OCI-LY7 (cell line): ENCODE measurements at regions of chr12 and their contacts with region 1.

Region 1: DNA sequence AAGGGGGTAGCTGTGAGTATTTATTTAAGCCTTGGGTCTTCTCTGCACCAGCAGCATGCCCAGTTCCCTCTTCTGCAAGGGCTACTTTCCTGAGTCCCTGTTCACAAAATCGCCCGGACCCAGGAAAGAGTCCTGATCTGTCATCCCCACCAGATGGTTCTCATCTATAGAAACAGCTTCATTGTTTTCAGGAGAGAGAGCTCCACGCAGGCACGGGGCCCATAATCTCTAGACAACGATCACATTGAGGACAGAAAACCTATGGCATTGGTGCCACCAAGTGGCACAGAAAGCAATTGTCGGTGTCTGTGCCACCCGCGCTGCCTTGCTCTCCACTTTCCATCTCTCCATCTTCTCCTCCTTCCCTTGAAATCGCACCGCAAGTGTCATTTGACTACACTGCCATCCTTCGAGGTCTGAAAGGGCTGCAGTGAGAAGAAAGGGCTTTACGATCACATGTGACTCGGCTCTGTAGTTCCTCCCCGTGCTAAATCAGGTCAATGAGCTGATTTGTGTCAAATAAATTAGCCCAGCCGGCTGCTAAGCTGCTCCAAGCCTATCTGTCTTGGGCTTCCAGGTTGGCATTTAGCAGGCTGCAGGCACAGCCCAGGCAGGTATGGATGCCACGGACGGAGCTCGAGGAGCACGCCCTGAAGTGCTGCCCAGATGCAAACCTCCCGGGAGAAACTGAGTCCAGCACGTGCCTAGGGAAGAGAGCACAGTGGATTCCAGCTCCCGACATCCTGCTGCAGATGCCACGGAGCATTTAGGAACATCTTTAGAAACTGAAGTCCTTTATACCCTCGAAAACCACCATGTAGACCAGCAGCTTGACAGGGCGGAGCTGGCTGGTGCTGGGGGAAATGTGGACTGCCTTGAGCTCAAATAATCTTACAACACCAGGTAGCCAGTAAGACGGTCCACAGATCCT is 28.8 kb downstream of the SPRING1 start:
- DNase-seq: peak; percentile 82
- H3K4me3 ChIP-seq: peak overlapping the region; percentile 39
- H3K27ac ChIP-seq: peak overlapping the region; percentile 85
- H3K4me1 ChIP-seq: peaks cover 63% of the 10 kb centered on the region
- CTCF ChIP-seq: peak; percentile 79

Region 2: GRCh38 chr12:116687888-116688287 is 21.2 kb before region 1 on chr12:
- CTCF ChIA-PET with region 1: no interaction called
- POLR2A ChIA-PET with region 1: no interaction called
- intact Hi-C with region 1: no loop called
- DNase-seq: peak; percentile 43
- H3K4me3 ChIP-seq: no peak overlapping the region
- H3K27ac ChIP-seq: no peak overlapping the region
- H3K4me1 ChIP-seq: no peaks in the 10 kb centered on the region
- CTCF ChIP-seq: peak; percentile 76

Region 3: GRCh38 chr12:116722245-116722644 is 13.2 kb after region 1 on chr12:
- CTCF ChIA-PET with region 1: no interaction called
- POLR2A ChIA-PET with region 1: interaction called, 11 read pairs
- intact Hi-C with region 1: no loop called
- DNase-seq: no peak
- H3K4me3 ChIP-seq: no peak overlapping the region
- H3K27ac ChIP-seq: no peak overlapping the region
- H3K4me1 ChIP-seq: peaks cover 28% of the 10 kb centered on the region
- CTCF ChIP-seq: no peak

Region 4: GRCh38 chr12:116737774-116738700 is 28.9 kb after region 1 on chr12 and contains the starts of genes RNFT2 and SPRING1:
- CTCF ChIA-PET with region 1: no interaction called
- POLR2A ChIA-PET with region 1: no interaction called
- intact Hi-C with region 1: loop called (anchors 2 kb)
- DNase-seq: peak; percentile 99
- H3K4me3 ChIP-seq: peak within 1 kb of the TSS; percentile 81
- H3K27ac ChIP-seq: peak within 1 kb of the TSS; percentile 65
- H3K4me1 ChIP-seq: peaks cover 17% of the 10 kb centered on the region
- CTCF ChIP-seq: peak; percentile 64
- total RNA-seq, gene RNFT2: 34.3 and 40.2 TPM in 2 replicates
- total RNA-seq, gene SPRING1: 51.2 and 75.5 TPM in 2 replicates

Region 5: DNA sequence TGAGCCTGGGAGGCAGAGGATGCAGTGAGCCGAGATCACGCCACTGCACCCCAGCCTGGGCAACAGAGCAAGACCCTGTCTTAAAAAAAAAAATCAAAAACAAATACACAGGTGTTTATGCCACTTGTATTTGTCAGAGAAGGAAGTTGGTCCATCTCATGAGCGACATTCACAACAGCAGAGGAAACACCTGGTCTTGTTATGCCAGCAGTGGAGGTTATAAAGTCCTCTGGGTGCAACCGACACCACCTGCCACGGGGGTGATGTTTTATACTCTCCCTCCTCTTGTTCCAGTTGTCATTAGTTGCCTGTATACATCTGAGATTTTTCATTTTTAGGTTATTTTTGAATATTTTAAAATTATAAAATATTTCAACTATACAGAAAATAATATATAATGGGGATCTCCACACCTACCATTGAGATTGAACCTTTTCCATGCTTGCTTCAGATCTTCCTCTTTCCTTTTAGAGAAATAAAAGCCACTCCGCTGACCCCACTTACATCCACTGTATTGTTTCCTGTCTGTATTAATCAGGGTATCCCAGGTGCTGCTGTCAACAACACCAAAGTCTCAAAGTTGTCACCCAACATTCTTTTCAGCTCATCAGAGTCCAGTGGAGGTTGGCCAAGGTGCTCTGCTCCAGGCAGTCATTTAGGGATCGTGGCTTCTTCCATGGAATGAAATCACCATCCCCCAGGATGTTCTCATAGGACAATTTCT is 94.1 kb after region 1 on chr12:
- CTCF ChIA-PET with region 1: no interaction called
- POLR2A ChIA-PET with region 1: interaction called, 8 read pairs
- intact Hi-C with region 1: loop called (anchors 1 kb)
- DNase-seq: peak; percentile 98
- H3K4me3 ChIP-seq: peak overlapping the region; percentile 55
- H3K27ac ChIP-seq: peak overlapping the region; percentile 100
- H3K4me1 ChIP-seq: peaks cover 76% of the 10 kb centered on the region
- CTCF ChIP-seq: no peak

Region 6: DNA sequence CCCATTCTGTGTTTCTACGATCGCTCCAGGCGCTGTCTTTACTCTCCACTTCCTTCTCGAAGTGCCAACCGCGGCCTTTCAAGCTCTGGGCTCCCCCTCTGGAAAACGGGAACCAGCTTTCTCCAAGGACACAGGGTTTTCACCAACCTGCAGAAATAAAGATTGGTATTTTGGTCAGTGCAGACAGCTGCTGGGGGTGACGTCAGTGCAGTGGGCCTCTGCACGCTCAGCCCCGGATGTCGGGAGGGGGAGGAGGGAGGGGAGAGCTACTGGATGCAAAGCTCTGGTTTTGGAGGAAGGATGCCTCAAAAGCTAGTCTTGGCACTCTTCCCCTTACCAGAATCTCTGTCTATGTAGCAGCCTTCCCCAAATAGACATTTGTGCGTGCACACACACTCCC is 152.2 kb after region 1 on chr12:
- CTCF ChIA-PET with region 1: interaction called, 4 read pairs
- POLR2A ChIA-PET with region 1: interaction called, 6 read pairs
- intact Hi-C with region 1: loop called (anchors 1 kb)
- DNase-seq: peak; percentile 92
- H3K4me3 ChIP-seq: peak overlapping the region; percentile 54
- H3K27ac ChIP-seq: peak overlapping the region; percentile 91
- H3K4me1 ChIP-seq: peaks cover 80% of the 10 kb centered on the region
- CTCF ChIP-seq: no peak

Region 7: DNA sequence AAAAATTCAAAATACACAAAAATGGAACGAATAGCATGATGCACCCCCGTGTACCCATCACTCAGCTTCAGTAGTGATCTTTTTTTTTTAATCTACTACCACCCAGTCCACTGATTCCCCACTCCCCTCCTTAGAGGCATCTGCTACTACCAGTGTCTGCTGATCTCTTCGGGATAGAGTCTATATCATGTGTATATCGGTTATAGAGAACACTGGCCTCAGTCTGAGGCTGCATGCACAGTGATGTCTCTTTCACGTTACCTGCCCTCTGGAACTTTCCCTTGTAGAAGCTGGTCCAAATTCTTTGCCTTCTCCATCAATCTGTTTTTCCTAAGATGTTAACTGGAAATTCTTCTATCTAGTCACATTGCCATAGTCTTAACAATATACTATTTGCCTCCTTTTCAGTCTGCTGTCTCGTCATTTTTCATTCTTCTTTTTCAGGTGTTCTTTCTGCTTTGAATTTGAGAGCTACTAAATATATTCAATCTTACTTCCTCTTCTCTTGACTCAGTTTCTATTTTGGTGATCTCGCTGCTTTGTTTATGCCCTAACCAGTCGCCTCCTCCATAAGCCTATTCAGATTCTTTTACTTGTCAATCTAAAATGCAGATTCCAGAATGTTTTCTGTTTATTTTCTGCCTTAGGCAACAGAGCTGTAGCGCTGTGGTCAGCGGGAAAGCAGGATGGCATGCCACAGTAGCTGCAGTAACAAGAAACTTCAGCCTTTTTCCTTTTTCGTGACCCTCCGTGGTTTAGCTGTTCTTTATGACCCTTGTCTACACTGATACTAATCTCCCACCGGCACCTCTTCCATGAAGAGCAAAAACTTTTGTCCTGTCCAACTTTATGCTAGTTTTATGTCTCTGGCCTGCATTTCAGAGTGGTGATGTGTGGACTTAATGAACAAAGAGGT is 268.6 kb after region 1 on chr12:
- CTCF ChIA-PET with region 1: interaction called, 11 read pairs
- POLR2A ChIA-PET with region 1: interaction called, 9 read pairs
- intact Hi-C with region 1: loop called (anchors 5 kb)
- DNase-seq: peak; percentile 77
- H3K4me3 ChIP-seq: peak overlapping the region; percentile 66
- H3K27ac ChIP-seq: peak overlapping the region; percentile 87
- H3K4me1 ChIP-seq: peaks cover 56% of the 10 kb centered on the region
- CTCF ChIP-seq: no peak